Activated naive CD4-positive, alpha-beta T cell treated with anti-CD3 and anti-CD28 coated beads, Interleukin-2, amount 10 ng/mL, durations not matched to agents 7 days and 5 days (primary cell): ENCODE measurements at regions of chr1 and their contacts with region 1.

Region 1: GRCh38 chr1:26363549-26364448 is 8.8 kb downstream of the ZNF683 start:
- DNase-seq: peak; percentile 90
- H3K4me3 Mint-ChIP-seq: no peak overlapping the region
- H3K27ac Mint-ChIP-seq: no peak overlapping the region
- H3K4me1 Mint-ChIP-seq: peaks cover 47% of the 10 kb centered on the region
- H3K27me3 Mint-ChIP-seq: peaks cover 79% of the 10 kb centered on the region

Region 2: DNA sequence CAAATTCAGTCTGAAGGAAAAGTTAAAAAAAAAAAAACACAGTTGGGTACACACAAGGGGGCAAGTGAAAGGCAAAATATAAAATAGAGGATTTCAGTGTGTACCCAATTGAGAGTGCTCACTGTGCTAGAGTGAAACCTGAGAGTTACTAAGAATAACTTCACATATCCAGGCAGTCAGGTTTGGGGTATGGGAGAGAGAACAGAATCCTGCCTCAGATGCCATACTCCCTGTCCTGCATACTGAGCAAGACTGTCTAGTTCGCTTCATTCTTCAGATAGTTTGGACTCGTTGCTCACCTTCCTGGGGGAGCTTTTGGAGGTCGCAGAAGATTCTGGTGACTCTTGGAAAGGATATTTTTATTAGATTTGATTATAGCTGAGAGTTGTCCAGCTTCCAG is 109.4 kb before region 1 on chr1:
- CTCF ChIA-PET with region 1: no interaction called
- DNase-seq: no peak
- H3K4me3 Mint-ChIP-seq: no peak overlapping the region
- H3K27ac Mint-ChIP-seq: no peak overlapping the region
- H3K4me1 Mint-ChIP-seq: no peaks in the 10 kb centered on the region
- H3K27me3 Mint-ChIP-seq: no peaks in the 10 kb centered on the region

Region 3: GRCh38 chr1:26378088-26378878 is 14.5 kb after region 1 on chr1:
- CTCF ChIA-PET with region 1: interaction called, 32 read pairs
- DNase-seq: peak; percentile 87
- H3K4me3 Mint-ChIP-seq: peak overlapping the region; percentile 33
- H3K27ac Mint-ChIP-seq: peak overlapping the region; percentile 86
- H3K4me1 Mint-ChIP-seq: peaks cover 79% of the 10 kb centered on the region
- H3K27me3 Mint-ChIP-seq: no peaks in the 10 kb centered on the region

Region 4: GRCh38 chr1:26391450-26391849 is 27.7 kb after region 1 on chr1:
- CTCF ChIA-PET with region 1: interaction called, 24 read pairs
- DNase-seq: peak; percentile 77
- H3K4me3 Mint-ChIP-seq: no peak overlapping the region
- H3K27ac Mint-ChIP-seq: no peak overlapping the region
- H3K4me1 Mint-ChIP-seq: peaks cover 49% of the 10 kb centered on the region
- H3K27me3 Mint-ChIP-seq: peaks cover 22% of the 10 kb centered on the region

Region 5: GRCh38 chr1:26399034-26399433 is 35.2 kb after region 1 on chr1:
- CTCF ChIA-PET with region 1: interaction called, 16 read pairs
- DNase-seq: no peak
- H3K4me3 Mint-ChIP-seq: no peak overlapping the region
- H3K27ac Mint-ChIP-seq: no peak overlapping the region
- H3K4me1 Mint-ChIP-seq: peaks cover 7% of the 10 kb centered on the region
- H3K27me3 Mint-ChIP-seq: peaks cover 27% of the 10 kb centered on the region

Region 6: GRCh38 chr1:26677306-26678115 is 313.7 kb after region 1 on chr1:
- CTCF ChIA-PET with region 1: no interaction called
- DNase-seq: peak; percentile 63
- H3K4me3 Mint-ChIP-seq: no peak overlapping the region
- H3K27ac Mint-ChIP-seq: peak overlapping the region; percentile 30
- H3K4me1 Mint-ChIP-seq: peaks cover 22% of the 10 kb centered on the region
- H3K27me3 Mint-ChIP-seq: peaks cover 9% of the 10 kb centered on the region